HepG2 (cell line): ENCODE measurements at regions of chr18 and their contacts with region 1.

Region 1: DNA sequence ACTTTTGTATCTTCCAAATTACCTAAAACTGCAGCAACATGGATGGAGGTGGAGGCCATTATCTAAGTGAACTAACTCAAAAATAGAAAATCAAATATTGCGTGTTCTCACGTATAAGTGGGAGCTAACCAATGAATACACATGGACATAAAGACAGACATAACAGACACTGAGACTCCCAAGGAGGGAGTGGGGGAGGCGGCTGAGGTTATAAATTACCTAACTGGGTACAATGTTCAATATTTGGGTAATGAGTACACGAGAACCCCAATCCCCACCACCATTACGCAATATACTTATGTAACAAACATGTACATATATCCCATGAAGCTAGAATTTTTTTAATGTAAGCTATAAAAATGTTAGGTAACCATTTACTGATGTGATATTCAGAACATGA is 119.8 kb downstream of the RTTN start:
- DNase-seq: no peak
- ATAC-seq: no peak
- H3K4me3 ChIP-seq: no peak overlapping the region
- H3K27ac ChIP-seq: no peak overlapping the region
- H3K4me1 ChIP-seq: peaks cover 10% of the 10 kb centered on the region
- H3K27me3 ChIP-seq: no peaks in the 10 kb centered on the region
- CTCF ChIP-seq: no peak
- EP300 ChIP-seq: no peak
- POLR2A ChIP-seq: no peak
- RAD21 ChIP-seq: no peak

Region 2: DNA sequence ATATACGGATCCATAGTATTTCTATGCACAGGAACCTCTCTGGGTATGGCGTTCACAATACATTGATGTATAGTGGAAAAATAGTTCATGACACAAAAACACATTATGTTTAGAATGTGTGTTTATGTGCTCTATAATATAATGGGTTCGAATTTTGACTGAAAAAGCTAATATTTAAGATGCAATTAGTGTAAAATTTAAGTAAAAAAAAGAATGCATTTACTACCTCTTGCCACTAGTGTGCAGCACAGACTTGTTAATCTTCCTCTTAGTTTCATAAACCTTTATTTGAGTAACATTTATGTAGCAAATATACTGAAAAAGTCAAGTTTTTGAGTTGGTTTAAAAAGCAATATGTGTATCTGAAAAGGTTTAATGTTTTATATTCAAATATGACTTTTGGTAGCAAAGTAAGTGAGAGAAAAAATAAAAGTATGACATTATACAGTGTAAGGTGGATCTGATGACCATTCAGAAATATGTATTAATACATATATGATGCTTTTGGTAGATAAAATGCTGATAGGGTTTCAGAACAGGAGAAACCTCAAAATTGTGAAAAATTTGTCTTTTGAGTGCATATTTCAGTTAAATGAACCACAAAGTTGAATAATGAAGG is 1238.3 kb before region 1 on chr18:
- CTCF ChIA-PET with region 1: interaction called, 4 read pairs
- POLR2A ChIA-PET with region 1: no interaction called
- in situ Hi-C with region 1: loop called (anchors 10 kb)
- intact Hi-C with region 1: loop called (anchors 1 kb)
- DNase-seq: peak; percentile 4
- ATAC-seq: no peak
- H3K4me3 ChIP-seq: no peak overlapping the region
- H3K27ac ChIP-seq: no peak overlapping the region
- H3K4me1 ChIP-seq: no peaks in the 10 kb centered on the region
- H3K27me3 ChIP-seq: no peaks in the 10 kb centered on the region
- CTCF ChIP-seq: peak; percentile 63
- EP300 ChIP-seq: no peak
- POLR2A ChIP-seq: no peak
- RAD21 ChIP-seq: peak; percentile 38; the same call in 1 of the 2 replicates

Region 3: GRCh38 chr18:68925268-68925667 is 1160.4 kb before region 1 on chr18:
- CTCF ChIA-PET with region 1: no interaction called
- POLR2A ChIA-PET with region 1: no interaction called
- in situ Hi-C with region 1: no loop called
- intact Hi-C with region 1: loop called (anchors 5 kb)
- DNase-seq: peak; percentile 13
- ATAC-seq: peak; percentile 75
- H3K4me3 ChIP-seq: no peak overlapping the region
- H3K27ac ChIP-seq: no peak overlapping the region
- H3K4me1 ChIP-seq: peaks cover 2% of the 10 kb centered on the region; the same call in 1 of the 2 replicates
- H3K27me3 ChIP-seq: no peaks in the 10 kb centered on the region
- CTCF ChIP-seq: peak; percentile 49
- EP300 ChIP-seq: no peak
- POLR2A ChIP-seq: no peak
- RAD21 ChIP-seq: 0 out of 2 replicates have a peak, but pooled peaks have one; percentile 25

Region 4: GRCh38 chr18:69636529-69637301 is 448.9 kb before region 1 on chr18:
- CTCF ChIA-PET with region 1: no interaction called
- POLR2A ChIA-PET with region 1: no interaction called
- in situ Hi-C with region 1: no loop called
- intact Hi-C with region 1: loop called (anchors 5 kb)
- DNase-seq: peak; percentile 6
- ATAC-seq: peak; percentile 95
- H3K4me3 ChIP-seq: no peak overlapping the region
- H3K27ac ChIP-seq: no peak overlapping the region
- H3K4me1 ChIP-seq: no peaks in the 10 kb centered on the region
- H3K27me3 ChIP-seq: no peaks in the 10 kb centered on the region
- CTCF ChIP-seq: peak; percentile 71
- EP300 ChIP-seq: no peak
- POLR2A ChIP-seq: no peak
- RAD21 ChIP-seq: peak; percentile 79

Region 5: GRCh38 chr18:70907673-70908072 is 822.0 kb after region 1 on chr18:
- CTCF ChIA-PET with region 1: no interaction called
- POLR2A ChIA-PET with region 1: no interaction called
- in situ Hi-C with region 1: no loop called
- intact Hi-C with region 1: no loop called
- DNase-seq: no peak
- ATAC-seq: no peak
- H3K4me3 ChIP-seq: no peak overlapping the region
- H3K27ac ChIP-seq: no peak overlapping the region
- H3K4me1 ChIP-seq: no peaks in the 10 kb centered on the region
- H3K27me3 ChIP-seq: no peaks in the 10 kb centered on the region
- CTCF ChIP-seq: no peak
- EP300 ChIP-seq: no peak
- POLR2A ChIP-seq: no peak
- RAD21 ChIP-seq: no peak